ENCODE measurements at regions of chr1 and their contacts with region 1.

Region 1: DNA sequence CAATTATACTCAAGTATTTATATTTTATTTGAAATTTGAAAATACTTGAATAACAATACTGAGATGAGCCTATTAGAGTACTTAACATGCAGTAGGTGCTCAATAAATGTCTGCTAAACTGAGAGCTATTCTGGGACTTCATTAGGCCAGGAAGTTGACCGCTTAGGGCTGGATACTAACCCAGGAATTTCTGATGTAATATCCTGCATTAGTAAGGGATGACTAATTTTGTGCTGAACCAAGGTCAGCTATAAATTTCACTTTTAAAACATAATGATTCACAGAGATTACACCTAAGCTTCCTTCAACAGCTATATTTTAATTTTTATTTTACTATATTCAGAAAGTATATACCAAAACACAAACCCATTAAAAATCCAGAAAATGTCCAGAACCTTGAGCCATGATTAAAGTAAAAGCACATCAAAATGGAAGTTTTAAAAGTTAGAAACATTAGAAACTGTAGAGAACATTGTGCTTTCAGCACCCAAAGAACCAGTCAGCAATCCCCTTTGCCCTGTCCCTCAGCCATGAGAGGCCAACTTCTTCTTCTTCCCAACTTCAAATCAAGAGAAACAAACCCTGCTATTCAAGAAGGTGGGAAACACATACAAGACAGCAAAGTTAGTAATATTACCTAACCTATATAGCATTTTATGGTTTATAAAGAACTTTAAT is 35.4 kb downstream of the WNT2B start:
- DNase-seq: no peak
- H3K4me3 ChIP-seq: no peak overlapping the region
- H3K27ac ChIP-seq: peak overlapping the region; percentile 79 to 86
- H3K4me1 ChIP-seq: peaks cover 0 to 18% of the 10 kb centered on the region in 2 donors
- H3K27me3 ChIP-seq: no peaks in the 10 kb centered on the region
- CTCF ChIP-seq: no peak

Region 2: GRCh38 chr1:112390775-112391602 is 153.2 kb before region 1 on chr1:
- intact Hi-C with region 1: loop called (anchors 5 kb)
- DNase-seq: peak; percentile 71 to 97
- H3K4me3 ChIP-seq: peak overlapping the region; percentile 48 to 64
- H3K27ac ChIP-seq: peak overlapping the region; percentile 92 to 98
- H3K4me1 ChIP-seq: peaks cover 8 to 45% of the 10 kb centered on the region in 2 donors
- H3K27me3 ChIP-seq: no peaks in the 10 kb centered on the region
- CTCF ChIP-seq: peak; percentile 90 to 96 (median 91)

Region 3: DNA sequence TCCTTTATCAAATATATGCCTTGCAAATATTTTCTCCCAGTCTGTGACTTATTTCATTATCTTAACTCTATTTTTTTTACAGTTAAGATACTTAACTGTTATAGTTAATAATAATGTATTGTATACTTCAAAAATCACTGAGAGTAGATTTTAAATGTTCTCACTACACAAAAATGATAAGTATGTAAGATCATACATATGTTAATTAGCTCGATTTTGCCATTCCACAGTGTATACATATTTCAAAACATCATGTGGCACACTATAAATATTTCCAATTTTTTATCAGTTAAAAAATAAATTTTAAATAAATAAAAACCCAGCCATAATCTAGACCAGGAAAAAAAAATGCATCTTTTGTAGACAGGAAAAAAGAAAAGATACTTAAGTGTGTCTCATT is 120.9 kb before region 1 on chr1:
- intact Hi-C with region 1: no loop called
- DNase-seq: no peak
- H3K4me3 ChIP-seq: no peak overlapping the region
- H3K27ac ChIP-seq: no peak overlapping the region
- H3K4me1 ChIP-seq: no peaks in the 10 kb centered on the region
- H3K27me3 ChIP-seq: no peaks in the 10 kb centered on the region
- CTCF ChIP-seq: no peak

Region 4: DNA sequence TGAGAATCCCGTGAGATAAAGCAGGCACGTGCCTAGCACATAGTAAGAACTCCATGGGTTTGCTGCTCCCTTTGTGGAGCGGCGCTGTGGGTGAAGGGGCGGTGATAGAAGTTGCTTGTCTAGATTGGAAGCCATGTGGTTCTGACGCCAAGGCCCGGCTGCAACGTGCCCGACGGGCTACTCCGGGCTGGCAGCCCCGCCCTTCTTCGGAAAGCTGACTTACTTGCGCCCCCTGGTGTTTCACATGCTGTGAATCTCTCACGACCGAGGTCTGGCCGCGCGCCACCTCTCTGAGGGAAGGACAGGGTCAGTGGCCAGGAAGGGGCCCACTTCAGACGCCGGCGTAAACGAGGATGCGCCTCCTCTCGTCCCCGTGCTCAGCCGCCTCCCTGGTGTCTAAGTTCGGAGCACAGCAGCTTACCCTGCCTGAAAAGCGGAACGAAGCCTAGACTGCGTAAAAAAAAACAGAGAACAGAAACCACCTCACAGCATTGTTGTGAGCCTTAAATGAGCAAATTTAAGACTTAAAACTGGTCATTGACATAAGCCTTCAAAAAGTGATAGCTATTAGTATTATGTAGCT is 78.0 kb before region 1 on chr1:
- intact Hi-C with region 1: loop called (anchors 5 kb)
- DNase-seq: peak; percentile 77 to 98
- H3K4me3 ChIP-seq: peak overlapping the region; percentile 48 to 59
- H3K27ac ChIP-seq: peak overlapping the region; percentile 67 to 72
- H3K4me1 ChIP-seq: peaks cover 5 to 7% of the 10 kb centered on the region in 2 donors
- H3K27me3 ChIP-seq: no peaks in the 10 kb centered on the region
- CTCF ChIP-seq: peak; percentile 88 to 96 (median 89)

Region 5: GRCh38 chr1:112501810-112502641 is 42.1 kb before region 1 on chr1:
- intact Hi-C with region 1: loop called (anchors 5 kb)
- DNase-seq: peak in 1 of 2 donors; percentile 81
- H3K4me3 ChIP-seq: peak overlapping the region; percentile 63 to 74
- H3K27ac ChIP-seq: peak overlapping the region in 1 of 2 donors; percentile 29
- H3K4me1 ChIP-seq: no peaks in the 10 kb centered on the region
- H3K27me3 ChIP-seq: no peaks in the 10 kb centered on the region
- CTCF ChIP-seq: peak; percentile 67 to 87 (median 71)